ENCODE measurements at regions of chr1 and their contacts with region 1.

Region 1: DNA sequence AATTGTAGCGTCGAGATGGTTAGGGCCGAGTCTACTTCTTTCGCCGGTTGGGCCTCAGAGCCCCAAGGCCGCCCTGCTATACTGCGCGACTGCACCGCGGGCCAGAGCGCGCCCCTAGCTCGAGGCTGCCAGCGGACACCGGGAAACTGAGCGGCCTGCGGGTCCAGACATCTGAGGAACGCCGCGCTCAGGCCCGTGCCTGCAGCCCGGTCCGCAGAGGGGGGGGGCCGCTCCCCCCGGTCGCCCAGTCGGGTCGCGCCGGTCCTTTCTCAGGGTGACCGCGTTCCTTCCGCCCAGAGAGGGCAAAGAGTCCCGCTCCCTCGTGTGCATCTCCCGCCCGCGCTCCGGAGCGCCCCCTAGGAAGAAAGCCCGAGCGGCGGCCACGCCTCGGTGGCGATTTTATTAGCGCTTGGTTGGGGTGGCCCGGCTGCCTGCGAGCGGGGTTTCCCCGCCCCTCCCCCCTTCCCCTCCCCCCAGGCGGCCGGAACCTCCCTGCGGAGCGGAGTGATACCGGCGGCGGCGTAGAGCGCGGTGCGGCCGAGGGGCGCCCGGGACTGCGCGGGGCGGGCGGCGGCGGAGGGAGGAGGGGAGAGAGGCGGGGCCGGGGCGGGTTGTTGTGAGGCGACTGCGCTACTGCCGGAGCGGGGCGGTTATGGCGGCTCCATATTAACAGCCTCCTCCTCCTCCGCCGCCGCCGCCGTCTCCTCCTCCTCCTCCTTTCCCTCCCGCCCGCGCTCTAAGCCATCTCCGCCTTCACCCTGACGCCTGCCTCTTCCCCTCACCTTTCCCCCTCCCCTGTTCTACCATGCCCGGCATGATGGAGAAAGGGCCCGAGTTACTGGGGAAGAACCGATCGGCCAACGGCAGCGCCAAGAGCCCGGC is at the start of gene RCOR3:
- DNase-seq: peak; percentile 87
- ATAC-seq: peak; percentile 86
- H3K4me3 ChIP-seq: peak within 1 kb of the TSS; percentile 100
- H3K27ac ChIP-seq: peak within 1 kb of the TSS; percentile 100
- H3K4me1 ChIP-seq: peaks cover 2% of the 10 kb centered on the region; the same call in 1 of the 2 replicates
- H3K27me3 ChIP-seq: no peaks in the 10 kb centered on the region
- CTCF ChIP-seq: peak; percentile 56
- POLR2A ChIP-seq: no peak; the same call in 1 of the 2 replicates
- RAD21 ChIP-seq: no peak
- total RNA-seq, gene RCOR3: 8.1 and 11.9 TPM in 2 replicates

Region 2: GRCh38 chr1:210597555-210598134 is 661.4 kb before region 1 on chr1:
- CTCF ChIA-PET with region 1: no interaction called
- POLR2A ChIA-PET with region 1: no interaction called
- dilution Hi-C with region 1: no loop called
- in situ Hi-C with region 1: no loop called
- intact Hi-C with region 1: loop called (anchors 5 kb)
- DNase-seq: peak; percentile 96
- ATAC-seq: peak; percentile 92
- H3K4me3 ChIP-seq: no peak overlapping the region
- H3K27ac ChIP-seq: peak overlapping the region; percentile 99
- H3K4me1 ChIP-seq: peaks cover 10% of the 10 kb centered on the region
- H3K27me3 ChIP-seq: no peaks in the 10 kb centered on the region
- CTCF ChIP-seq: 0 out of 2 replicates have a peak, but pooled peaks have one; percentile 2
- POLR2A ChIP-seq: no peak; the same call in 1 of the 2 replicates
- RAD21 ChIP-seq: peak; percentile 16; the same call in 1 of the 2 replicates